Right lobe of liver (tissue), 6 donors: ENCODE measurements at regions of chr1 and their contacts with region 1.

Region 1: DNA sequence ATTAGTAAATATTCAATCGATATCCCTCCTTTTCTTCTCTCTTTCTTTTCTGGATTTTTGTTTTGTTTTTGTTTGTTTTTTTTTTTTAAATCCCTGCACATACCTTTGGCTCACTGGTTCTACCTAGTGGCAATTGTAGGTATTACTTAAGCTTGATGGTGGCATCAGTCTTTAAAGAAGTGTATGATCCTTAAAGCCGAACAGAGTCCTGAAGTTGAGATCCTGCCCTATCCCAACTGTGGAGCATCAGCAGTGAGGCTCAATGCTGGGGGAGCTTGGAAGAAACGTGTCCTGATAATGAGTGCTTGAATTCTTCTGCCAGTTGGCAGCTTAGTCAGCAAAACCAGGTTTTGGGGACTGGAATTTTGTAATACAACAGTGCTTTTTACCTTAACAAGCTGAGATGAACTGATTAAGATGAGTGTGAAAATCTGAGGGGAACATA is 60.8 kb downstream of the FASLG start:
- DNase-seq: no peak
- ATAC-seq: peak; percentile 65 to 84 (median 81)
- H3K4me3 ChIP-seq: no peak overlapping the region
- H3K27ac ChIP-seq: no peak overlapping the region
- H3K4me1 ChIP-seq: peaks cover 0 to 8% (median 0%) of the 10 kb centered on the region in 4 donors
- H3K27me3 ChIP-seq: no peaks in the 10 kb centered on the region
- CTCF ChIP-seq: peak; percentile 70 to 85 (median 80)
- POLR2A ChIP-seq: no peak

Region 2: GRCh38 chr1:172443626-172444453 is 275.9 kb before region 1 on chr1 and contains the start of gene PIGC:
- intact Hi-C with region 1: loop called in 1 of 2 experiments (anchors 10 kb)
- DNase-seq: peak; percentile 92 to 93 (median 93)
- ATAC-seq: peak; percentile 100
- H3K4me3 ChIP-seq: peak within 1 kb of the TSS; percentile 85 to 98 (median 86)
- H3K27ac ChIP-seq: peak within 1 kb of the TSS; percentile 69 to 82 (median 81)
- H3K4me1 ChIP-seq: peaks cover 0 to 10% (median 0%) of the 10 kb centered on the region in 4 donors
- H3K27me3 ChIP-seq: no peaks in the 10 kb centered on the region
- CTCF ChIP-seq: peak; percentile 75 to 90 (median 86)
- POLR2A ChIP-seq: peak; percentile 54
- total RNA-seq, gene PIGC: 6.7 to 12.0 (median 8.7) TPM

Region 3: GRCh38 chr1:172449585-172450534 is 269.9 kb before region 1 on chr1:
- intact Hi-C with region 1: loop called (anchors 10 kb)
- DNase-seq: peak; percentile 58 to 78 (median 74)
- ATAC-seq: peak; percentile 81 to 94 (median 92)
- H3K4me3 ChIP-seq: peak overlapping the region in 1 of 3 donors; percentile 17
- H3K27ac ChIP-seq: peak overlapping the region; percentile 17 to 66 (median 25)
- H3K4me1 ChIP-seq: peaks cover 0 to 21% (median 2%) of the 10 kb centered on the region in 4 donors
- H3K27me3 ChIP-seq: no peaks in the 10 kb centered on the region
- CTCF ChIP-seq: peak; percentile 82 to 94 (median 84)
- POLR2A ChIP-seq: no peak

Region 4: DNA sequence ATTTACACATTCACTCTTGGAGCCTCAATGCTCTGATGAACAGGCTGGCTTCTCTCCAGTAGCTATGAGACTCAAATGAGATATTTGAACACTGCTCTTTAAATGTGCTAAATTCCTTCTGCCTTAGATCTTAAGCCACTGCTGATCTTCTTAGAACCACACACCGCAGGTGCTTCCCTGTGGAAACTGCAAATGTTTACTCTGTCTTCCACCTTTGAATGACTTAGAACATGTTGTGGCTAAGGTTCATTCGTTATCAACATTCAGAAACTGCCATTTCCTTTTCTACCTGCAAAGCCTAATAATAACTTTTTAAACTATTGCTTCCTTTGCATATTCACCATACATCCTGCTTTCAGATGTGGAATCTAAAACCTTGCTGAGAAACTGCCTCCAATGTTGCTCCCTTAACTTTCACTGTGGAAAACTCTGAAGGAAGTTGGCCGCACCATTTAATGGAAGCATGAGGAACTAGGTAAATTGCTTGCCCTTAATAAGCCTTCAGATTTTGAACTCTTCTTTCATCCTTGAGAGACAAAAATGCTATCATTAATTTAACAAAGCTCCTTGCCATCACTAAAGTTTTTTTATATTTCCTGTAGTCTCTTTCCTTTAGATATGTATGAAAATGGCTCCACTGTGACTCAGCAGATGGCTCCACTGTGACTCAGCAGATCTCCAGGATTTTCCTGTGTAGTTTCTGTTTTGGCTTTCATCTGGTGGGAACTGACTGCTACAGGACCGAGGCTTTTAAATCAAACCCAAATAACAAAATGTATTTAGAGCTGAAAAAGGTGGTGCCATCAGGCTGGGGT is 187.3 kb after region 1 on chr1:
- intact Hi-C with region 1: no loop called
- DNase-seq: no peak
- ATAC-seq: no peak
- H3K4me3 ChIP-seq: no peak overlapping the region
- H3K27ac ChIP-seq: no peak overlapping the region
- H3K4me1 ChIP-seq: no peaks in the 10 kb centered on the region
- H3K27me3 ChIP-seq: no peaks in the 10 kb centered on the region
- CTCF ChIP-seq: no peak
- POLR2A ChIP-seq: no peak